ENCODE measurements at regions of chrX and their contacts with region 1.

Region 1: DNA sequence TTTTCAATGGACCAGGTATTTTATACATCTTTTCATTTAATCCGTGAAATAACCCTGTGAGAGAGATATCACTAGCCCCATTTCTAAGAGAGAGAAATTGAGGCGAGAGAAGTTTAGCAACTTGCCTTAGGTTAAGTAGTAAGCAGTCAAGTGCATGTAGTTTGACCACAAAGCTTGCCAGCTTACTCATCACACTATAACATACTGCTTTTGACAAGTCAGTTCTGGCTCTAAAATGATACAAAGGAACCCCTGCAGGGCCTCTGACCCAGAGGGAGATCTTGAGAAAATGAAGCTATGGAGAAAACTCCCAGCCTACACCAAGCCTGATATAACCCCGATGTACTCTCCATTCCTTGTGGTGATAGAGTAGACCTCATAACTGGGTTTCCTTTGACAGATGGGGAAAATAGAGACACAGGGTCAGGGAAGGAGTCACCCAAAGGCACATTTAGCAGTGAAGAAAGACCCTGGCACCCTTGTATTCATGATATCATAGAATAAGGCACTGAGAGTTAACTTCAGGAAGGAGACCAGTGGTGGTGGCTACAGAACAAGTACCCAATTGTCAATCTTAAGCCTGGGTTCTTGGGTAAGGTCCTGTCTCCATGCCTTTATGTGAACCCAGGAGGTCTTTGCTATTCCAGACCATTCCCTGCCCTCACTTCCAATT is 60.2 kb upstream of the MSN start:
- DNase-seq: no peak
- CTCF ChIP-seq: no peak

Region 2: DNA sequence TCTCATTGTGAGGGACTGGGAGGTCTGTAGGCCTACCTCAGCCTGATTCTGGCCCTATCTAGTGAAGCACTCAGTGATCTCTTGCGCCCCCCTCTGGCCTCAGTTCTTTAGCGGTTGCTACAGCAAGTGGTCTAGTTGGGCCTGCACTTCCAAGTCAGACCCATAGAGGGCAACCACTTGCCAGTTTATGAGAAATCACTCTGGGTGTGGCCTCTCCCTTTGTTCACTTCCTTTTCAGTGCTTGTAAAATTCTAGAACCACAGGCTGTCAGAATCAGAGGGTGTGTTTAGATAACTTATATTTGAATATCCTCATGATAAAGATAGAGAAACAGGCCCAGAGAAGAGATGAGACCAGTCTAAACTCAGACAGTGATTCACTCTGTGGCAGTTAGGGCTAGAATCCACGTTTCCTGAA is 11.7 kb before region 1 on chrX:
- CTCF ChIA-PET with region 1: interaction called, 10 read pairs
- POLR2A ChIA-PET with region 1: interaction called, 5 read pairs
- DNase-seq: peak; percentile 69
- CTCF ChIP-seq: peak; percentile 93

Region 3: DNA sequence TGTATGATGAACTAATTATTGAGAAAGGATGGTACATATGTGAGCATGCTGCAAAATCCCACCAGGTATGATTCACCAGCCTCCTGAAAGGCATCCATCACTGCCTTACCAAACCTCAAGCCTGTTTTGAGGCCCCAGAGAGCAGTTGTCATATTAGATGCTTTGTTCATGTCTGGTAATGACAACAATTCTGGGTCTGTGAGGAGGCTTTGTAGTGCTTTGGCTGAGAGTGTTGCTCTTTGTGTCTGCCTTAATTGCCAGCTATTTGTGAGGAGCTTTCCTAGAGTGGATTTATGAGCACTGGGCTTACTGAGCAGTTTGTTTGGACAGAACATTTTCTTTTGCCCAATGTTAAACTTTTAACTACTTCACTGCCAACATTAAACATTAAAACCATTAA is 626.0 kb after region 1 on chrX:
- CTCF ChIA-PET with region 1: no interaction called
- POLR2A ChIA-PET with region 1: no interaction called
- DNase-seq: no peak
- CTCF ChIP-seq: no peak